Colonic mucosa (tissue), 4 donors: ENCODE measurements at regions of chr16 and their contacts with region 1.

Region 1: GRCh38 chr16:14070877-14071575 is at the start of gene MRTFB:
- DNase-seq: peak; percentile 88
- H3K4me3 ChIP-seq: peak within 1 kb of the TSS; percentile 95
- H3K27ac ChIP-seq: peak within 1 kb of the TSS; percentile 58
- H3K4me1 ChIP-seq: no peaks in the 10 kb centered on the region
- H3K27me3 ChIP-seq: no peaks in the 10 kb centered on the region
- CTCF ChIP-seq: no peak
- total RNA-seq, gene MRTFB: 31.4 to 40.3 TPM

Region 2: GRCh38 chr16:14186007-14186794 is 115.2 kb after region 1 on chr16:
- intact Hi-C with region 1: loop called (anchors 10 kb)
- DNase-seq: no peak
- H3K4me3 ChIP-seq: no peak overlapping the region
- H3K27ac ChIP-seq: peak overlapping the region; percentile 14
- H3K4me1 ChIP-seq: no peaks in the 10 kb centered on the region
- H3K27me3 ChIP-seq: no peaks in the 10 kb centered on the region
- CTCF ChIP-seq: peak; percentile 21